PC-9 (cell line): ENCODE measurements at regions of chr6 and their contacts with region 1.

Region 1: DNA sequence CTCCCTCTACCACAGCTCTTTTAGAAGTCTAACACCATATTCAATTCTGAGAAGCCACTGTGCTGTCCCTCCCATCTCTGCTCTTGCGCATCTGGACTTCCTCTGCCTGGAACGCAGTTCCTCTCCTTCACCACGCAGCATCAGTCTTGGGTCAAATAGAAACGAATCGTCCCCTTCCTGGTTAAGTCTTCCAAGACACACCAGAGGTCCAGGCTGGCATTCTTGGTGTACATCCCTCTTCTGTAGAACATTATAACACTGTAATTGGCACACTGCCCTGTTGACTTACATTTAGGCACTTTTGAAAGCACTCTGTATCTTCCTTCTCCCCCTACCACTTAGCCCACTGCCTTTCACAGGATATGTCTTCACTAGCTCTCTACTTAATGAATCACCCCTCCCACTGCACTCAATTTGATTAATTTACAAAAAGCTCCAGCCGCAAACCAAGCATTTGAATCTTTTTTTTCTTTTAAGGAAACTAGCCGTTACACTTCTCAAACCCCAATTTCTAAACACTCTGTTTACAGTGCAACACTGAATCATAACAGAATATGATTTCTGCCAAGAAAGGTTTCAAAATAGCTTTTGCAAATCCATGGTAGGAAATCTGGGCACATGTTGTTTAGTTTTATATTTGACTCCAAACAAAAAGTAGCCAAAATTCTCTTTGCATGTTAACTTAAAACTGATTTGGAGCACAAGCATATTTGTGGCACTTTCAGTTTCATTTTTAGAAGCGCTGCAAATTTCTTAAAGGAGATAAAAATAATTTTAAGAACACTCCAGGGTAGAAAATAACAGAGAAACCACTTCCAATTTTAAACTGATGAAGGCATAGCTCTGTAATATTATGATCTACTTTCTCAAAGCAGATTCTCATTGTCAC is 140.7 kb upstream of the CARMIL1 start:
- DNase-seq: peak in 1 of 2 experiments; percentile 24
- H3K4me3 ChIP-seq: peak overlapping the region; percentile 52
- H3K27ac ChIP-seq: peak overlapping the region; percentile 22; the same call in 1 of the 2 replicates
- H3K4me1 ChIP-seq: peaks cover 14% of the 10 kb centered on the region
- H3K27me3 ChIP-seq: no peaks in the 10 kb centered on the region
- CTCF ChIP-seq: no peak

Region 2: DNA sequence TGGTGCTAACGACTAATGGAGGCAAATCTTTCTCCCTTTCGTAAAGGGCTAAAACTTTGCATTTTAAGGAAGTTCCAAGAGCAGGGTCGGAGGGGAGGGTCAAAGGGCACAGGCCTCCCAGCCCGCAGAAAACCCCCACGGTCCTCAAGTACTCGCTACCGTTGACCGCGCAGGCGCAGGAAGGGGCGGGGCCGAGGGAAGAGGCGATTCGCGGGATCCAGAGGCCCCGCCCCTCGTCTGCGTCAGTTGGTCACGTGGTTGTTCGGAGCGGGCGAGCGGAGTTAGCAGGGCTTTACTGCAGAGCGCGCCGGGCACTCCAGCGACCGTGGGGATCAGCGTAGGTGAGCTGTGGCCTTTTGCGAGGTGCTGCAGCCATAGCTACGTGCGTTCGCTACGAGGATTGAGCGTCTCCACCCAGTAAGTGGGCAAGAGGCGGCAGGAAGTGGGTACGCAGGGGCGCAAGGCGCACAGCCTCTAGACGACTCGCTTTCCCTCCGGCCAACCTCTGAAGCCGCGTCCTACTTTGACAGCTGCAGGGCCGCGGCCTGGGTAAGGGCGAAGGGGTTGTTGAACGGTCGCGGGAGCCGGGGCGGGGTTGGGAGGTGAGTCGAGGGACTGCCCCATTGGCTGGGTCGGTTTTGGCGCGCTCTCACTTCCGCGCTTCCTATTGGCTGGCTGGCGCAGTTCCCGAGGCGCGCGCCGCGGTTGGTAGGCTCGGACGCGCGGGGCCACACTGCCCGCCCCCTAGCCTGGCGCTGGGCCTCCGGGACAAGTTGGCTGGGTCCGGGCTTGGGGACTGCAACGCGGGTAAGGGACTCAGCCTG is 363.6 kb before region 1 on chr6 and contains the start of gene GMNN:
- CTCF ChIA-PET with region 1: no interaction called
- POLR2A ChIA-PET with region 1: interaction called, 27 read pairs
- intact Hi-C with region 1: no loop called
- DNase-seq: peak; percentile 83 to 96
- H3K4me3 ChIP-seq: peak within 1 kb of the TSS; percentile 72
- H3K27ac ChIP-seq: peak within 1 kb of the TSS; percentile 65
- H3K4me1 ChIP-seq: peaks cover 43% of the 10 kb centered on the region
- H3K27me3 ChIP-seq: no peaks in the 10 kb centered on the region
- CTCF ChIP-seq: no peak
- total RNA-seq, gene GMNN: 53.1 and 54.8 TPM in 2 replicates